CD14-positive monocyte (primary cell): ENCODE measurements at regions of chr10 and their contacts with region 1.

Region 1: GRCh38 chr10:110225756-110226542 is 18.5 kb downstream of the MXI1 start:
- DNase-seq: peak; percentile 82 to 84 (median 84)
- H3K4me3 ChIP-seq: peak overlapping the region; percentile 94 to 99 (median 97)
- H3K4me3 Mint-ChIP-seq: peak overlapping the region; percentile 94 to 95
- H3K27ac ChIP-seq: peak overlapping the region; percentile 70 to 71
- H3K27ac Mint-ChIP-seq: peak overlapping the region; percentile 83 to 96 (median 91)
- H3K4me1 ChIP-seq: peaks cover 33 to 34% of the 10 kb centered on the region in 2 donors
- H3K4me1 Mint-ChIP-seq: peaks cover 41% of the 10 kb centered on the region
- H3K27me3 ChIP-seq: no peaks in the 10 kb centered on the region
- H3K27me3 Mint-ChIP-seq: no peaks in the 10 kb centered on the region
- CTCF ChIP-seq: peak; percentile 57

Region 2: DNA sequence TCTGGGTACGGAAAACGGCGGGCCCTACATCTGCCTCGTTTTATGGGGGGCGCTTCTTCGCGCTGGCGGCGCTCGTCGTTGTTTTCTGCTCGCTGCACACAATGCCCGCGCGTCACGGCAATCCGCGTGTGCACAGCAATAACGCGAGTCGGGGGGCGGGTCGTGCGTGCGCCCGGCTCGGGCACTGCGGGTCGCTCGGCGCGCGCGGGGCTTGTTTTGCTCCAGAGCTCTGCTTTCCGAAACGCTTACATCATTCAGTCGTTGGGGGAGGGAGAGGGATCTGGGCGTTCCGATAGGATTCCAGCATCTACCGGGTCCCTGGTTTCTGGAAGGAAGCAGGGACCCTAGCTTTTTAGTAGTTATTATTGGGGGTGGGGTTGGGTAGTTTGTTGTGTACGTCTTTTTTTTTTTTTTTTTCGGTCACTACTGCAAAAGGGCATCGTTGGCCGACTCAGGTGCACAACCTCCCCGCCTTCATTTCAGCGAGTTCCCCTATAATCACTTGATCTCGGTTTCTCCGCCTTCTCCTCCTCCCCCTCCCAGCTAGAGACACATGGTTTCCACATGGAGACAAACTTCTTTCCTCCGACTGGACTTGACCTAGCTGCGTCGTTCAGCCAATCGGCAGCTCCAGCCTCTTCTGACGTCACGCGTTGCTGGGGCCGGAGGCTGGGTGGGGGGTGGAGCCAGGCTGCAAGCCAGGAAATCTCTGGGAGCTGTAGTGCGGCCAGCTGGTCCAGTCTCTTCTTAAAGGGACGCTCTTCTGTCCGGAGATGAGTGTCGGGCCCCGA is 15.1 kb before region 1 on chr10:
- intact Hi-C with region 1: loop called in 1 of 2 experiments (anchors 2 kb)
- DNase-seq: peak; percentile 93 to 96 (median 95)
- H3K4me3 ChIP-seq: peak overlapping the region; percentile 55 to 91 (median 63)
- H3K4me3 Mint-ChIP-seq: peak overlapping the region; percentile 93 to 94
- H3K27ac ChIP-seq: peak overlapping the region; percentile 54 to 93
- H3K27ac Mint-ChIP-seq: peak overlapping the region; percentile 93 to 99 (median 97)
- H3K4me1 ChIP-seq: peaks cover 57 to 71% of the 10 kb centered on the region in 2 donors
- H3K4me1 Mint-ChIP-seq: peaks cover 58% of the 10 kb centered on the region
- H3K27me3 ChIP-seq: peaks cover 0 to 7% of the 10 kb centered on the region in 2 donors
- H3K27me3 Mint-ChIP-seq: peaks cover 8 to 20% (median 14%) of the 10 kb centered on the region in 3 donors
- CTCF ChIP-seq: no peak

Region 3: GRCh38 chr10:110273474-110273873 is 47.5 kb after region 1 on chr10:
- intact Hi-C with region 1: loop called in 1 of 2 experiments (anchors 5 kb)
- DNase-seq: peak; percentile 74 to 87 (median 85)
- H3K4me3 ChIP-seq: peak overlapping the region in 1 of 3 experiments; percentile 48
- H3K4me3 Mint-ChIP-seq: peak overlapping the region; percentile 57 to 81
- H3K27ac ChIP-seq: peak overlapping the region; percentile 47 to 68
- H3K27ac Mint-ChIP-seq: peak overlapping the region; percentile 69 to 95 (median 88)
- H3K4me1 ChIP-seq: peaks cover 31 to 35% of the 10 kb centered on the region in 2 donors
- H3K4me1 Mint-ChIP-seq: peaks cover 43% of the 10 kb centered on the region
- H3K27me3 ChIP-seq: no peaks in the 10 kb centered on the region
- H3K27me3 Mint-ChIP-seq: no peaks in the 10 kb centered on the region
- CTCF ChIP-seq: no peak

Region 4: DNA sequence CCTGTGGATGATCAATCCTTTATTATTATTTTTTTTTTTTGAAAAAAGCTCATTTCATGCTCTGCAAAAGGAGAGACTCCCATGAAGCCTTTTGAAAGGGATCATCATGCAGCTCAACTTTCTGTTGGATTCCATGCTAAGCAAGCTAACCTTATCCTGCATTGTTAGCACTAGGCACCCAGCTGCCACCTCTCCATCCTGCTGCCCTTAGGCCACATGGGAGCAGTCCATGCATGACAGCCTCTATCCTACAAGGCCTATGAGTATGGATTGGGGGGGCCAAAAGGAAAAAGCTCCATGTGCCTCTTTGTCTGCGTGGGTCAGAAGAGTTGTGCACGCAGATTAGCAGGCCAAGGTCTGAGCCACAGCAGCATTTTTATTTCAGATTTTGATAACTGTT is 59.6 kb after region 1 on chr10:
- intact Hi-C with region 1: loop called in 1 of 2 experiments (anchors 5 kb)
- DNase-seq: no peak
- H3K4me3 ChIP-seq: no peak overlapping the region
- H3K4me3 Mint-ChIP-seq: no peak overlapping the region
- H3K27ac ChIP-seq: no peak overlapping the region
- H3K27ac Mint-ChIP-seq: no peak overlapping the region
- H3K4me1 ChIP-seq: no peaks in the 10 kb centered on the region
- H3K4me1 Mint-ChIP-seq: no peaks in the 10 kb centered on the region
- H3K27me3 ChIP-seq: no peaks in the 10 kb centered on the region
- H3K27me3 Mint-ChIP-seq: no peaks in the 10 kb centered on the region
- CTCF ChIP-seq: no peak